ENCODE measurements at regions of chr1 and their contacts with region 1.

Region 1: GRCh38 chr1:37514350-37515184 is at the start of gene MEAF6:
- DNase-seq: peak; percentile 61 to 73
- ATAC-seq: peak; percentile 96 to 97
- H3K4me3 ChIP-seq: peak within 1 kb of the TSS; percentile 62 to 96 (median 70)
- H3K27ac ChIP-seq: peak within 1 kb of the TSS; percentile 86 to 96 (median 91)
- H3K4me1 ChIP-seq: peaks cover 11 to 14% of the 10 kb centered on the region in 2 donors
- H3K27me3 ChIP-seq: no peaks in the 10 kb centered on the region
- CTCF ChIP-seq: peak; percentile 70 to 94 (median 87)
- POLR2A ChIP-seq: peak; percentile 66 to 74
- total RNA-seq, gene MEAF6: 72.1 to 81.0 (median 74.5) TPM

Region 2: DNA sequence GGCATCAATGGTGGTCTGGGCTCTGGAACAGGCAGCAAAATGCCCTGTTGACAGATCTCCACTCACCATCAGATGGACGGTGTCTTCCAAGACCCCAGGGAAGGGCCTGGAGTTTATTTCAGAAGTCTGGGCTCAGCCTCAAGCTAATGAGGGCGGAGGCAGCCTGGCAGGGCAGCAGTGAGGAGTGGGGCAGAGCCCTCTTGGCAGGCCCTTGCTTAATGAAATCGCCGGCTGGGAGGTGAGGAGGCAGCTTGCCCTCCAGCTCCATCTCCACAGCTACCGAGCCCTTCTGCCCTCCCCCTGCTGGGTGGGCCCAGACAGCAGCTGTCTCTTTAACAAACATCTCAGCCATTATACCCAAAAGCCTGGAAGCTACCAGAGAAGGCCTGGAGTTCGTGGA is 458.2 kb before region 1 on chr1:
- in situ Hi-C with region 1: no loop called
- intact Hi-C with region 1: no loop called
- DNase-seq: no peak
- ATAC-seq: no peak
- H3K4me3 ChIP-seq: no peak overlapping the region
- H3K27ac ChIP-seq: no peak overlapping the region
- H3K4me1 ChIP-seq: no peaks in the 10 kb centered on the region
- H3K27me3 ChIP-seq: no peaks in the 10 kb centered on the region
- CTCF ChIP-seq: no peak
- POLR2A ChIP-seq: no peak

Region 3: DNA sequence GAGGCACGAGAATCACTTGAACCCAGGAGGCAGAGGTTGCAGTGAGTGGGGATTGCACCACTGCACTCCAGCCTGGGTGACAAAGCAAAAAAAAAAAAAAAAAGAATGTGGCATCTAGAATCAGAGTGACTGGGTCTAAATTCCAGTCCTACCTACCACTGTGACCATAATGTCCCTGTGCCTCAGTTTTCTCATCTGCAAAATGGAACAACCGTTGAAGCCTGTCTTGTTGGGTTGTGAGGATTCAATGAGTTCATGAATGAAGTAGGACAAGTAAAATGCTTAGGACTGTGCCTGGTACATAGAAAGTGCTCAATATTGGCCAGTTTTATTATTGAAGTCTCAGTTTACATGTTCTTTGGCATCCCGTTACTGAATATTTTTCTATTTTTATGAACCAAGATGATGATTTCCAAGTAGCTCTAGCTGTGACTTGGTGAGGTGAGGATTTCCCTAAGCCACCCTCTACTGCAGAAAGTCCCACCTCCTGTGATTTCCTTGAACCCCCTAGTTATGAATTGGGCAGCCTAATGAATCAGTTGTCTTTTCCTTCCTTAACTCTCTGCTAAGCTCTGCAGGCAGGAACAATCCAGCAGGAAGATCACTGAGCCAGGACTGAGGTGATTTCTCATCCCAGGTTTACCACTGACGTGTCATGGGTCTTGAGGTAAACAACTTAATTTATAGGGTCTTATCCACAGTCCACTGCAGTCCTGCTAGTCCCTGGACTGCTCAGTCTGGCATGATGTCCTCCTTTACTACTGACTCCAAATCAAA is 18.9 kb after region 1 on chr1:
- in situ Hi-C with region 1: no loop called
- intact Hi-C with region 1: loop called (anchors 2 kb)
- DNase-seq: no peak
- ATAC-seq: no peak
- H3K4me3 ChIP-seq: no peak overlapping the region
- H3K27ac ChIP-seq: peak overlapping the region; percentile 51 to 66 (median 59)
- H3K4me1 ChIP-seq: peaks cover 14 to 19% of the 10 kb centered on the region in 2 donors
- H3K27me3 ChIP-seq: no peaks in the 10 kb centered on the region
- CTCF ChIP-seq: no peak
- POLR2A ChIP-seq: no peak

Region 4: GRCh38 chr1:37553927-37554808 is 39.6 kb after region 1 on chr1 and contains the start of gene SNIP1:
- in situ Hi-C with region 1: no loop called
- intact Hi-C with region 1: loop called (anchors 1 kb)
- DNase-seq: peak; percentile 91 to 92
- ATAC-seq: peak; percentile 98
- H3K4me3 ChIP-seq: peak within 1 kb of the TSS; percentile 71 to 100 (median 92)
- H3K27ac ChIP-seq: peak within 1 kb of the TSS; percentile 83 to 94 (median 88)
- H3K4me1 ChIP-seq: peaks cover 17 to 21% of the 10 kb centered on the region in 2 donors
- H3K27me3 ChIP-seq: no peaks in the 10 kb centered on the region
- CTCF ChIP-seq: no peak
- POLR2A ChIP-seq: peak; percentile 65 to 81
- total RNA-seq, gene SNIP1: 5.2 to 9.2 (median 6.5) TPM

Region 5: GRCh38 chr1:37974567-37974966 is 460.0 kb after region 1 on chr1:
- in situ Hi-C with region 1: no loop called
- intact Hi-C with region 1: no loop called
- DNase-seq: no peak
- ATAC-seq: no peak
- H3K4me3 ChIP-seq: no peak overlapping the region
- H3K27ac ChIP-seq: no peak overlapping the region
- H3K4me1 ChIP-seq: no peaks in the 10 kb centered on the region
- H3K27me3 ChIP-seq: no peaks in the 10 kb centered on the region
- CTCF ChIP-seq: no peak
- POLR2A ChIP-seq: no peak

Region 6: GRCh38 chr1:39132505-39133339 is 1618.2 kb after region 1 on chr1:
- in situ Hi-C with region 1: no loop called
- intact Hi-C with region 1: no loop called
- DNase-seq: peak; percentile 20 to 46
- ATAC-seq: peak; percentile 40 to 55
- H3K4me3 ChIP-seq: peak overlapping the region in 1 of 4 donors; percentile 8
- H3K27ac ChIP-seq: peak overlapping the region; percentile 59 to 71 (median 64)
- H3K4me1 ChIP-seq: peaks cover 47 to 53% of the 10 kb centered on the region in 2 donors
- H3K27me3 ChIP-seq: no peaks in the 10 kb centered on the region
- CTCF ChIP-seq: peak in 2 of 5 experiments; percentile 32 to 34
- POLR2A ChIP-seq: no peak

Measured in gastrocnemius medialis (tissue), 4 donors.